ENCODE measurements at regions of chr1 and their contacts with region 1.

Region 1: GRCh38 chr1:6613361-6614018 is at the start of gene PHF13:
- DNase-seq: peak; percentile 100
- ATAC-seq: peak; percentile 91 to 98 (median 92)
- H3K4me3 ChIP-seq: peak within 1 kb of the TSS; percentile 82
- H3K27ac ChIP-seq: peak within 1 kb of the TSS; percentile 98
- H3K4me1 ChIP-seq: peaks cover 23% of the 10 kb centered on the region
- H3K27me3 ChIP-seq: no peaks in the 10 kb centered on the region
- CTCF ChIP-seq: no peak
- total RNA-seq, gene PHF13: 5.4 to 21.3 (median 8.2) TPM

Region 2: GRCh38 chr1:5532811-5533210 is 1080.7 kb before region 1 on chr1:
- intact Hi-C with region 1: no loop called
- DNase-seq: no peak
- ATAC-seq: no peak
- H3K4me3 ChIP-seq: no peak overlapping the region
- H3K27ac ChIP-seq: no peak overlapping the region
- H3K4me1 ChIP-seq: no peaks in the 10 kb centered on the region
- H3K27me3 ChIP-seq: peaks cover 0 to 7% (median 2%) of the 10 kb centered on the region in 3 donors
- CTCF ChIP-seq: no peak

Region 3: DNA sequence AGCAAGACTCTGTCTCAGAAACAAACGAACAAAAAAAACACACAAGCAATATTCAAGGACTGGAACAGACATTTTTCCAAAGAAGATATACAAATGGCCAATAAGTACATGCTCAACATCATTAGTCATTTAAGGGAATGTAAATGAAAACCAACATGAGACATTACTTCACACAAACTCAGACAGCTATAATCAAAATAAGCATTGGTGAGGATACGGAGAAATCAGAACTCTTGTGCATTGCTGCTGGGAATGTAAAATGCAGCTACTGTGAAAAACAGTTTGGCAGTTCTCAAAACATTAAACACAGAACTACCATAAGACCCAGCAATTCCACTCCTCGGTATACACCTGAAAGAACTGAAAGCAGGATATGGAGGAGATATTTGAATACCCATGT is 74.5 kb before region 1 on chr1:
- intact Hi-C with region 1: no loop called
- DNase-seq: no peak
- ATAC-seq: no peak
- H3K4me3 ChIP-seq: no peak overlapping the region
- H3K27ac ChIP-seq: no peak overlapping the region
- H3K4me1 ChIP-seq: no peaks in the 10 kb centered on the region
- H3K27me3 ChIP-seq: no peaks in the 10 kb centered on the region
- CTCF ChIP-seq: no peak

Region 4: GRCh38 chr1:6602669-6603237 is 10.7 kb before region 1 on chr1 and contains the start of gene KLHL21:
- intact Hi-C with region 1: loop called in 1 of 2 experiments (anchors 1 kb)
- DNase-seq: peak; percentile 95 to 97
- ATAC-seq: peak; percentile 64 to 81 (median 70)
- H3K4me3 ChIP-seq: peak within 1 kb of the TSS; percentile 87
- H3K27ac ChIP-seq: peak within 1 kb of the TSS; percentile 98
- H3K4me1 ChIP-seq: peaks cover 43% of the 10 kb centered on the region
- H3K27me3 ChIP-seq: no peaks in the 10 kb centered on the region
- CTCF ChIP-seq: no peak
- total RNA-seq, gene KLHL21: 87.3 to 253 (median 113) TPM

Measured in psoas muscle (tissue), 8 donors.